ENCODE measurements at regions of chr7 and their contacts with region 1.

Region 1: GRCh38 chr7:135447783-135448182 is 62.1 kb downstream of the CNOT4 start:
- DNase-seq: no peak
- ATAC-seq: peak in 1 of 4 donors; percentile 36
- H3K4me3 ChIP-seq: no peak overlapping the region
- H3K27ac ChIP-seq: no peak overlapping the region
- H3K4me1 ChIP-seq: peaks cover 21% of the 10 kb centered on the region
- H3K27me3 ChIP-seq: no peaks in the 10 kb centered on the region
- CTCF ChIP-seq: no peak

Region 2: GRCh38 chr7:135414850-135415439 is 32.8 kb before region 1 on chr7:
- intact Hi-C with region 1: no loop called
- DNase-seq: no peak
- ATAC-seq: peak in 2 of 4 donors; percentile 50 to 65
- H3K4me3 ChIP-seq: no peak overlapping the region
- H3K27ac ChIP-seq: no peak overlapping the region
- H3K4me1 ChIP-seq: peaks cover 3% of the 10 kb centered on the region
- H3K27me3 ChIP-seq: no peaks in the 10 kb centered on the region
- CTCF ChIP-seq: peak; percentile 42

Region 3: GRCh38 chr7:135509903-135510602 is 62.3 kb after region 1 on chr7 and contains the start of gene CNOT4:
- intact Hi-C with region 1: loop called in 1 of 2 experiments (anchors 5 kb)
- DNase-seq: peak; percentile 97 to 98
- ATAC-seq: peak; percentile 97 to 99 (median 98)
- H3K4me3 ChIP-seq: peak within 1 kb of the TSS; percentile 94
- H3K27ac ChIP-seq: peak within 1 kb of the TSS; percentile 94
- H3K4me1 ChIP-seq: peaks cover 22% of the 10 kb centered on the region
- H3K27me3 ChIP-seq: no peaks in the 10 kb centered on the region
- CTCF ChIP-seq: no peak
- total RNA-seq, gene CNOT4: 27.6 to 43.7 (median 33.5) TPM